Calu3 (cell line): ENCODE measurements at regions of chr5 and their contacts with region 1.

Region 1: GRCh38 chr5:72552041-72552557 is 44.9 kb upstream of the ZNF366 start:
- DNase-seq: no peak
- H3K4me3 Mint-ChIP-seq: no peak overlapping the region
- H3K27ac Mint-ChIP-seq: no peak overlapping the region
- H3K4me1 Mint-ChIP-seq: peaks cover 14% of the 10 kb centered on the region
- H3K27me3 Mint-ChIP-seq: peaks cover 18% of the 10 kb centered on the region
- CTCF ChIP-seq: no peak

Region 2: GRCh38 chr5:72531496-72532190 is 20.5 kb before region 1 on chr5:
- CTCF ChIA-PET with region 1: interaction called, 10 read pairs
- intact Hi-C with region 1: no loop called
- DNase-seq: no peak
- H3K4me3 Mint-ChIP-seq: no peak overlapping the region
- H3K27ac Mint-ChIP-seq: no peak overlapping the region
- H3K4me1 Mint-ChIP-seq: no peaks in the 10 kb centered on the region
- H3K27me3 Mint-ChIP-seq: peaks cover 19% of the 10 kb centered on the region
- CTCF ChIP-seq: no peak